Heart left ventricle (tissue), 16 donors: ENCODE measurements at regions of chr17 and their contacts with region 1.

Region 1: GRCh38 chr17:71032746-71033273 is 863.5 kb downstream of the KCNJ2 start:
- DNase-seq: no peak
- ATAC-seq: no peak
- H3K4me3 ChIP-seq: no peak overlapping the region
- H3K27ac ChIP-seq: no peak overlapping the region
- H3K4me1 ChIP-seq: no peaks in the 10 kb centered on the region
- H3K27me3 ChIP-seq: no peaks in the 10 kb centered on the region
- CTCF ChIP-seq: no peak
- POLR2A ChIP-seq: no peak

Region 2: GRCh38 chr17:70752972-70753467 is 279.8 kb before region 1 on chr17:
- intact Hi-C with region 1: loop called in 1 of 10 experiments (anchors 5 kb)
- DNase-seq: no peak
- ATAC-seq: no peak
- H3K4me3 ChIP-seq: no peak overlapping the region
- H3K27ac ChIP-seq: no peak overlapping the region
- H3K4me1 ChIP-seq: no peaks in the 10 kb centered on the region
- H3K27me3 ChIP-seq: no peaks in the 10 kb centered on the region
- CTCF ChIP-seq: no peak
- POLR2A ChIP-seq: no peak

Region 3: DNA sequence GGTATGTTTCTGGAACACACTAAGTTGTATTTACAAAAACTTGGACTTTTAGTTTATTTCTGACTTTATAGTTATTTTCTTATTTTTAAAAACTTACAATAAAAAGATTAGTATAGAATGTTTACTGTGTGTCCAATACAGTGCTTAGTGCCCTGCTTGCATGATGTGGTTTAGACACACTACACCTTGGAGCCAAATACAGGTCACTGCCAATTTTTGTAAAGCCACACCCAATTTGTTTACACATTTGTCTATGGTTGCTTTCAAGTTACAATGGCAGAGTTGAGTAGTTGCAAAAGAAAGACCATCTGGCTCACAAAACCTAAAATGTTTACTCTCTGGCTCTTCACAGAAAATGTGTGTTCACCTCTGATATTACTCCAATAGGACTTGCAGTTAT is 56.4 kb before region 1 on chr17:
- intact Hi-C with region 1: loop called in 1 of 10 experiments (anchors 10 kb)
- DNase-seq: no peak
- ATAC-seq: no peak
- H3K4me3 ChIP-seq: no peak overlapping the region
- H3K27ac ChIP-seq: no peak overlapping the region
- H3K4me1 ChIP-seq: no peaks in the 10 kb centered on the region
- H3K27me3 ChIP-seq: no peaks in the 10 kb centered on the region
- CTCF ChIP-seq: no peak
- POLR2A ChIP-seq: no peak